ENCODE measurements at regions of chr6 and their contacts with region 1.

Region 1: DNA sequence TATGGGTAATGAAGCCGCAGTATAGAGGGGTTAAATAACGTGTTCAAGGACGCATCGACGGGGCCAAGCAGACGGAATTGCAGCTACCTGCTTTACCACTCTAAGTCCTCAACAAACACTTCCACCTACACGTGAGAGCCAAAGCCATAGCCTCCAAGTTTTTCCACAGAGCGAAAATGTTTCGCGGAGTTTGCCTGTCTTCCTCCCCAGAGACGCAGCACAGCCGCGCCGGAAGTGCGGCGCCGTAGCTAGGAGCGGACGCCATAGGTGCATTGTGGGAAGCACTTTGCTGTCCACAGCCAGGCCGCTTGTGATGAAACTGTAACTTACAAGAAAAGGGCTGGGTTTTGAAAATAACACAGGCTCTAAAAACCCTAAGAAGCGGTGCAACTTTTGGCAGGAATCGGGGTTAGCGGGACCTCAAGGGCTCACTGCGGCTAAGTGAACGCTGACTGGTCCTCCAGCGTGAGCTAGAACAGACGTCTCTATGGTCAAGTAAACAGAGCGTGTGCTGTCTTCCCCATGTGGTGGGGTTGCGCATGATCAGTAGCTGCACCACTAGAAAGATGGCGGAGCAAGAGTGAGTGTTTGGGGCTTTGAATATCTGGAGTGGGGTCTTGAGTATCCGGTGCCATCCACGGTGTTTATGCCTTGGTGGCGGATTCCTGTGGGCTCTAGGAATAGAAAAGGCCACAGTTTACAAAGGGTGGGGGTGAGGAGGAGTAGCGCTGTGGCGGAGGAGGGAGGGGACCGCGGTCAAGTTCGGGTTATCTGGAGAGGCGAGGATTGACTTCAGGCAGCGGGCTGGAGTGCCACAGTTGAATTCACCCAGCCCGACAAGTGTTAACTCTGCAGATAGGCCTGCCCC is at the start of gene RPL7L1:
- DNase-seq: peak; percentile 89
- ATAC-seq: peak; percentile 96
- H3K4me3 Mint-ChIP-seq: peak within 1 kb of the TSS; percentile 99
- H3K27ac Mint-ChIP-seq: peak within 1 kb of the TSS; percentile 100
- H3K4me1 Mint-ChIP-seq: peaks cover 20% of the 10 kb centered on the region
- H3K27me3 Mint-ChIP-seq: no peaks in the 10 kb centered on the region
- total RNA-seq, gene RPL7L1: 124 to 152 TPM

Region 2: GRCh38 chr6:42563697-42564505 is 315.7 kb before region 1 on chr6 and contains the start of gene UBR2:
- CTCF ChIA-PET with region 1: no interaction called
- POLR2A ChIA-PET with region 1: interaction called, 3 read pairs
- intact Hi-C with region 1: loop called in 1 of 2 experiments (anchors 1 kb)
- DNase-seq: peak; percentile 97
- ATAC-seq: peak; percentile 97
- H3K4me3 Mint-ChIP-seq: peak within 1 kb of the TSS; percentile 97
- H3K27ac Mint-ChIP-seq: peak within 1 kb of the TSS; percentile 95
- H3K4me1 Mint-ChIP-seq: peaks cover 31% of the 10 kb centered on the region
- H3K27me3 Mint-ChIP-seq: no peaks in the 10 kb centered on the region
- total RNA-seq, gene UBR2: 23.9 to 28.1 TPM

Region 3: DNA sequence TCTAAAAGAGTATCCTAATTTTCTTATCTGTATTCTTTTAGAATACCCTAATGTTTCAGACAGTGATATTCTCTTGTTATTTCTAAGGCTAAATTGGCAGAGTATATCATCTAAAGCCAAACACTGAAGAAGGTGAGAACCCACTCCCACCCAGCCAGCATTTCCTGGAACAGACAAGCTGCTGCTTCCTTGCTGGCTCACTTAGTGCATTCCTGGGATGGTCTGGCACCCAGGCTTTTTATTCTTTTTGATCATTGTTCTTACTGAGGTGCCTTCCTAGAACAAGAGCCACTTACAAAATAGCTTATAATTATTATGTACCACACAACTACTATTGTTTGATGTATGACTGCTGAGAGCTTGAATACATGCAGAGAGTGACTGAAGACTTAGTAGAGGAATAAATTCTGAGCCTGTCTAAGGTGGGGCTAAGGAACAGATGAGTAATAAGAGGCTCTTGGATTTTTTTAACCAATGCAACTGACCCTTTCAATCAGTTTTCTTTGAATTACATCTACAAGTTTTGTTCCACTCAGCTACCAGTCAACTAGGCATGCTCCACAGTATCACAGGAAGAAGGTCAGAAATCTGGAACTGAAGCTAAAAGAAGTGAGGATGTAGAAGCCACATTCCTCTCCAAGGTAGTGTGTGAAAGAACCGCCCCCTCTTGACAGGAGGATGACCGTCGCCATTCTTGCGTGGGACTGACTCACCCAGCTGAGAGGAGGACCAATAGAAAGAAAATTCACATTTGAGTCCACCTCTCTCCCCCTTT is 187.3 kb before region 1 on chr6:
- CTCF ChIA-PET with region 1: interaction called, 8 read pairs
- POLR2A ChIA-PET with region 1: interaction called, 10 read pairs
- intact Hi-C with region 1: no loop called
- DNase-seq: peak; percentile 26
- ATAC-seq: peak; percentile 52
- H3K4me3 Mint-ChIP-seq: no peak overlapping the region
- H3K27ac Mint-ChIP-seq: peak overlapping the region; percentile 29
- H3K4me1 Mint-ChIP-seq: peaks cover 23% of the 10 kb centered on the region
- H3K27me3 Mint-ChIP-seq: no peaks in the 10 kb centered on the region

Region 4: DNA sequence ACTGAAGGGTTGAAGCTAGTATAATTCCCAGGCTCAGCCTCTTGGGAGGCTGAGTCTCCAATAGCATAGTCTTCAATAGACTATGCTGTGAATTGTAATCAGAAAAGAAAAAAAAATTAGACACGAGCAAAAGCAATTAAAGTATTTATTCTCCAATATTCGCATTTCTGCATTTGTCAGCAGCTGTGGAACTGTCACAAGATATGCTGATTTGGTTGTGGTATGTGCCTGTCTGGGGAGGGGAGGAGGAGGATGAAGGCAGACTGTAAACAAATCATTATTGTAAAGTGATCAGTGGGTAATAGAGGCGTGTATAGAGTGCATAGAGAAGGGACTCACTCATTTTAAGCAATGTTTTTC is 107.9 kb before region 1 on chr6:
- CTCF ChIA-PET with region 1: no interaction called
- POLR2A ChIA-PET with region 1: no interaction called
- intact Hi-C with region 1: loop called in 1 of 2 experiments (anchors 1 kb)
- DNase-seq: no peak
- ATAC-seq: no peak
- H3K4me3 Mint-ChIP-seq: peak overlapping the region; percentile 70
- H3K27ac Mint-ChIP-seq: peak overlapping the region; percentile 99
- H3K4me1 Mint-ChIP-seq: peaks cover 58% of the 10 kb centered on the region
- H3K27me3 Mint-ChIP-seq: no peaks in the 10 kb centered on the region

Region 5: GRCh38 chr6:42890311-42891198 is 10.9 kb after region 1 on chr6:
- CTCF ChIA-PET with region 1: interaction called, 5 read pairs
- POLR2A ChIA-PET with region 1: interaction called, 19 read pairs
- intact Hi-C with region 1: loop called (anchors 1 kb)
- DNase-seq: peak; percentile 95
- ATAC-seq: peak; percentile 89
- H3K4me3 Mint-ChIP-seq: peak overlapping the region; percentile 90
- H3K27ac Mint-ChIP-seq: peak overlapping the region; percentile 98
- H3K4me1 Mint-ChIP-seq: peaks cover 31% of the 10 kb centered on the region
- H3K27me3 Mint-ChIP-seq: no peaks in the 10 kb centered on the region

Measured in activated CD4-positive, alpha-beta T cell treated with anti-CD3 and anti-CD28 coated beads for 36 hours (primary cell).